ENCODE measurements at regions of chr15 and their contacts with region 1.

Region 1: DNA sequence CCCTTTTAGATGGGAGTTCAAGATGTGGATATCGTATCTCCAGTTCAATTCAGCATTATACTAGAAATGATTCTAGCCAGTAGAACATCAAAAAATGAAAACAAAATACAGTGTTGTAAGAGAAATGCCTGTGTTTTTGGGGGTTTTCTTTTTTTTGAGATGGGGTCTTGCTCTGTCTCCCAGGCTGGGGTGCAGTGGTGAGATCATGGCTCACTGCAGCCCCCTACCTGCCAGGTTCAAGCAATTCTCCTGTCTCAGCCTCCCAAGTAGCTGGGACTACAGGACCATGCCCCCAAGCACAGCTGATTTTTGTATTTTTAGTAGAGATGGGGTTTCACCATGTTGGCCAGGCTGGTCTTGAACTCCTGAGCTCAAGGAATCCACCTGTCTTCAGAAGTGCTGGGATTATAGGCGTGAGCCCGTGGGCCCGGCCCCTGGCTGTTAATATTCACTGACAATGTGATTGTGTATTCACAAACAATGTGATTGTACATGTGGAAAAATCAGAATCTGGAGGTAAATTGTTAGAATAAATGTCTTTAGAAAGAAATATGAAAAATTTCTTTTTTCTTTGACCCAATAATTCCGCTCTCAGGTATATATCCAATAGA is 59.0 kb downstream of the ARIH1 start:
- DNase-seq: no peak
- ATAC-seq: peak in 2 of 4 donors; percentile 61 to 65
- H3K4me3 ChIP-seq: no peak overlapping the region
- H3K27ac ChIP-seq: no peak overlapping the region
- H3K4me1 ChIP-seq: peaks cover 13% of the 10 kb centered on the region
- H3K27me3 ChIP-seq: no peaks in the 10 kb centered on the region
- CTCF ChIP-seq: peak; percentile 34

Region 2: GRCh38 chr15:72487070-72487797 is 45.9 kb before region 1 on chr15:
- intact Hi-C with region 1: loop called in 1 of 2 experiments (anchors 5 kb)
- DNase-seq: no peak
- ATAC-seq: peak; percentile 32 to 70 (median 58)
- H3K4me3 ChIP-seq: no peak overlapping the region
- H3K27ac ChIP-seq: peak overlapping the region; percentile 3
- H3K4me1 ChIP-seq: peaks cover 75% of the 10 kb centered on the region
- H3K27me3 ChIP-seq: no peaks in the 10 kb centered on the region
- CTCF ChIP-seq: no peak

Measured in psoas muscle (tissue), 8 donors.